Natural killer cell (primary cell): ENCODE measurements at regions of chr4 and their contacts with region 1.

Region 1: DNA sequence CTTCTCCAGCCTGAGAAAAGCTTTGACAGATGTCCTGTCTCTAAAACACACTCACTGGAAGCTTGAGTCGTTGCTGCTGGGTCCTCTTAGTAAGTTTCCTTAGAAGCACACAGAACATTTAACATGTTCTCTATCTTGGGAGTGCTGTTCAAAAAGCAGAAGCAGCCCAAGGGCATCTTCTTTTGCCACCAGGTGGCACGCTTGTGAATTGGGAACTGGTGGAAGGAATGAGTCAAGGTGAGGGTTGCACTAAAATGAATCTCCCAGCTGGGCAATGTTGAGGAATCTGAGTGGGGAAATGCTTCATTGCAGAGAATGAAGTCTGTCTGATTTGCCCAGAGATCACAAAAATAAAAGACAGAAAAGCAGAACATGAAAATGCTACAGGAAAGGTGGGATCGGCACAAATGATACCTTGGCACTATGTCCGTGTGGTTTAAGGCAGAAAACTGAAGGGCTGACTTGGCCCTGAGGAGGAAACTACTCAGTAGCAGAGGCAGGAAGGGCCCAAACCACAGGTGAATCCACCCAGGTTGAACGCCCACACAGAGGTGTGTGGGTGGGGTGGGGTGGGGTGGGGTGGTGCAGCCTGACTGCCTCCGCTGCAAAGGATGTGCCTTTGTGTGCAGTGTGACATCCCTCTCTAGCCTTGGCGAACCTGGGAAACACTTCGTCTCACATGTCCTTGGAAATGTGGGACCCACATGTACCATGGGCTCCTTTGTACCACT is 26.0 kb downstream of the KIT start:
- DNase-seq: peak; percentile 48 to 70
- ATAC-seq: peak; percentile 44 to 56 (median 45)
- H3K4me3 ChIP-seq: no peak overlapping the region
- H3K4me3 Mint-ChIP-seq: peak overlapping the region; percentile 84
- H3K27ac ChIP-seq: peak overlapping the region; percentile 52
- H3K27ac Mint-ChIP-seq: peak overlapping the region; percentile 14 to 81
- H3K4me1 ChIP-seq: peaks cover 51% of the 10 kb centered on the region
- H3K4me1 Mint-ChIP-seq: peaks cover 33 to 42% of the 10 kb centered on the region in 2 donors
- H3K27me3 ChIP-seq: no peaks in the 10 kb centered on the region
- H3K27me3 Mint-ChIP-seq: peaks cover 0 to 8% of the 10 kb centered on the region in 2 donors
- CTCF ChIP-seq: peak; percentile 67

Region 2: DNA sequence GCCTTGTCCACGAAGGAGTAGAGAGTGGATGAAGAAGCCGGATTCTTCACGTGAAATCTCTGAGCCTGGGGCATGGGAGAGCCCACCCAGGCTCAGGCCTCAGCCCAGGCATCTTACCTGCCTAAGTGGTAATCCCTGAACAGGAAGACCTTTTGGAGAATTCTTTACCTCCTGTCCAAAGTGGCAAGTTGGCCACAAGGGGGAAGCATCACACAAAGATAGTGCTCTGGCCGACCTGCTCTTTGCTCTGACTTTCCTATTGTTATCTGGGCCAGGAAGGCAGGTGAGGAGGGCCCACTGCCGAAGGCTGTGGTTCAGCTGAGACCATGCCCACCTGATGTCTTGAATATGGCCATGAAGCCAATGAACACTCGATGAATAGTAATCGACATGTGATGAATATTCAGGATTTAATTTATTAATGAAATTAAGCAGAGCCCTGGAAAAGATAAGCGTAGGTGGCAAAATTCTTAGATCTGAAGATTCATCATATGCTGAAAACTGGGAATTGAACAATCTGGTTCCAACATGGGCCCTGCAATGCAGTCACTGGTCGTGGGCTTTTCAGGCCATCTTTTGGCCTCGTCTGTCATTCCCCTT is 360.9 kb before region 1 on chr4:
- intact Hi-C with region 1: loop called (anchors 5 kb)
- DNase-seq: peak in 1 of 2 donors; percentile 64
- ATAC-seq: peak in 2 of 3 donors; percentile 52 to 53
- H3K4me3 ChIP-seq: no peak overlapping the region
- H3K4me3 Mint-ChIP-seq: no peak overlapping the region
- H3K27ac ChIP-seq: no peak overlapping the region
- H3K27ac Mint-ChIP-seq: no peak overlapping the region
- H3K4me1 ChIP-seq: no peaks in the 10 kb centered on the region
- H3K4me1 Mint-ChIP-seq: no peaks in the 10 kb centered on the region
- H3K27me3 ChIP-seq: no peaks in the 10 kb centered on the region
- H3K27me3 Mint-ChIP-seq: peaks cover 0 to 4% of the 10 kb centered on the region in 2 donors
- CTCF ChIP-seq: peak; percentile 56

Region 3: GRCh38 chr4:54632537-54632936 is 51.2 kb before region 1 on chr4:
- intact Hi-C with region 1: no loop called
- DNase-seq: no peak
- ATAC-seq: no peak
- H3K4me3 ChIP-seq: no peak overlapping the region
- H3K4me3 Mint-ChIP-seq: no peak overlapping the region
- H3K27ac ChIP-seq: no peak overlapping the region
- H3K27ac Mint-ChIP-seq: no peak overlapping the region
- H3K4me1 ChIP-seq: no peaks in the 10 kb centered on the region
- H3K4me1 Mint-ChIP-seq: peaks cover 8 to 10% of the 10 kb centered on the region in 2 donors
- H3K27me3 ChIP-seq: no peaks in the 10 kb centered on the region
- H3K27me3 Mint-ChIP-seq: peaks cover 6 to 21% of the 10 kb centered on the region in 2 donors
- CTCF ChIP-seq: no peak

Region 4: DNA sequence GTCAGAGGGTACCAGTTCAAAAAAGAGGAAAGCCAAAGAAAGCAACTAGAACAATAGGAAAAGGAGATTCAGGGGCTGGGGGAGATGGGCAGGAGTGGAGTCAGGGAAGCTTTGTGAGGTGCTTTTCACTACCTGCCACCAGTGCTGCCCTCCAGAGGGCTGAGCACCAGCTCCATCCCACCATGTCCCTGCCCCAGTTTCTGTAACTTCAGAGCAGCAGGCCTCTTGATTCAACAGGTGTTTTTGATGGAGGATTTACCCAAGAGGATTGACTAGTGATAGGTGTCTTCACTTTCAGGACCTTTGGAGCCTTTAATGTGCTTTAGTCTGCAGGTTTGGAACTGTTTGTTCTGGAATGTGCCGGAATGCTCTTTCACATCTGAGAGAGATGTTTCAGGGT is 13.9 kb before region 1 on chr4:
- intact Hi-C with region 1: no loop called
- DNase-seq: no peak
- ATAC-seq: no peak
- H3K4me3 ChIP-seq: no peak overlapping the region
- H3K4me3 Mint-ChIP-seq: no peak overlapping the region
- H3K27ac ChIP-seq: no peak overlapping the region
- H3K27ac Mint-ChIP-seq: no peak overlapping the region
- H3K4me1 ChIP-seq: peaks cover 3% of the 10 kb centered on the region
- H3K4me1 Mint-ChIP-seq: peaks cover 7 to 8% of the 10 kb centered on the region in 2 donors
- H3K27me3 ChIP-seq: no peaks in the 10 kb centered on the region
- H3K27me3 Mint-ChIP-seq: peaks cover 15 to 19% of the 10 kb centered on the region in 2 donors
- CTCF ChIP-seq: no peak

Region 5: DNA sequence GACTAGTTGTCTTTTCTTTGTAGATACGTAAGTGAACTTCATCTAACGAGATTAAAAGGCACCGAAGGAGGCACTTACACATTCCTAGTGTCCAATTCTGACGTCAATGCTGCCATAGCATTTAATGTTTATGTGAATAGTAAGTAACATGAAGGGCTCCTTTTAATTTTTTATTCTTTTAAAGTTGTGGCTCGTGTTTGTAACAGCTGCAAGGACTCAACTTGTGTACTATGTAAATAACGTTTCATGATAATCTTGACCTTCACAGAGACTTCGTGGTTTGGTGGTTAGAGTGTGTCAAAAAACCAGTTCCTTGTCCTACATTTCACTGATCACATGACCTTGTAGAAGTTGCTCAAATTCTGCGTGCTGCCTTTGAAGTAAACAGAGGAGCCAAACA is 25.6 kb after region 1 on chr4:
- intact Hi-C with region 1: loop called (anchors 2 kb)
- DNase-seq: peak in 1 of 2 donors; percentile 56
- ATAC-seq: peak; percentile 74 to 81 (median 77)
- H3K4me3 ChIP-seq: peak overlapping the region; percentile 10
- H3K4me3 Mint-ChIP-seq: peak overlapping the region; percentile 69
- H3K27ac ChIP-seq: peak overlapping the region; percentile 76
- H3K27ac Mint-ChIP-seq: peak overlapping the region; percentile 72 to 88
- H3K4me1 ChIP-seq: peaks cover 29% of the 10 kb centered on the region
- H3K4me1 Mint-ChIP-seq: peaks cover 47 to 48% of the 10 kb centered on the region in 2 donors
- H3K27me3 ChIP-seq: no peaks in the 10 kb centered on the region
- H3K27me3 Mint-ChIP-seq: peaks cover 0 to 7% of the 10 kb centered on the region in 2 donors
- CTCF ChIP-seq: no peak

Region 6: DNA sequence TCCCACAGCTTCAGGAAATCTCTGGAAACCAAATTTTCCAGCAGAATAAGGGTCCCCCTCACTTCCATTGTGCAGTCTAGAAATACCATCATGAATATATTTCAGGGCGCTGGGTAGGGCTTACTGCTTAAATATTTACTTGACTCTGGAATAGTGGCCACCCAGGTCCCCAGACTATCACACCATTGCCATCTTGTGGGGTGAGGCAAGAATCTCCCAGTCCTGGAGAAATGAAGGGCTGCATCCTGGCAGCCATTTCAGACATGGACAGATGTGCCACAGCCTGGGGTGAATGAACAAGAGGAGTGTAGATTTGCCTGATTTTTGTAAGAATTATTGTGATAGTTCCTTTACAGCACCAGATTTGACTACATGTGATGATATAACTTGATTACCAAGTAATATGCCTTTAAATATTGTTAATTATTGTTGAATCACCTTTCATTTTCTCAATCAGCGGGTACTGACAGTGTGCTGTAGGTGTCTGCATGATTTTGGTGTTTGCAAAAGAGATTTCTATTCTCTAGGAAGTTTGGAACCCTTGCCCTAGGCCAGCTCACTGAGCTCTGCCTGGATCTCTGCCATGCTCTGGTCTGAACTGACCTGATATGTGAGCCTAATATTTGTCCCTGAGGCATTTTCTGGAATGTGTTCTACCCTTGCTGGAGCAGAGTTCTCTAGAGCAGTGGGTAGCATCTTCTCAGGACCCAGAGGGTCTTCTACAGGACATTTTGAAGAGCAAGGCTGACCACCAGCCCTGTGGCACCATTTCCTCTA is 157.4 kb after region 1 on chr4:
- intact Hi-C with region 1: loop called (anchors 1 kb)
- DNase-seq: peak in 1 of 2 donors; percentile 4
- ATAC-seq: peak in 1 of 3 donors; percentile 32
- H3K4me3 ChIP-seq: no peak overlapping the region
- H3K4me3 Mint-ChIP-seq: no peak overlapping the region
- H3K27ac ChIP-seq: no peak overlapping the region
- H3K27ac Mint-ChIP-seq: no peak overlapping the region
- H3K4me1 ChIP-seq: peaks cover 18% of the 10 kb centered on the region
- H3K4me1 Mint-ChIP-seq: peaks cover 10 to 13% of the 10 kb centered on the region in 2 donors
- H3K27me3 ChIP-seq: no peaks in the 10 kb centered on the region
- H3K27me3 Mint-ChIP-seq: no peaks in the 10 kb centered on the region
- CTCF ChIP-seq: no peak

Region 7: DNA sequence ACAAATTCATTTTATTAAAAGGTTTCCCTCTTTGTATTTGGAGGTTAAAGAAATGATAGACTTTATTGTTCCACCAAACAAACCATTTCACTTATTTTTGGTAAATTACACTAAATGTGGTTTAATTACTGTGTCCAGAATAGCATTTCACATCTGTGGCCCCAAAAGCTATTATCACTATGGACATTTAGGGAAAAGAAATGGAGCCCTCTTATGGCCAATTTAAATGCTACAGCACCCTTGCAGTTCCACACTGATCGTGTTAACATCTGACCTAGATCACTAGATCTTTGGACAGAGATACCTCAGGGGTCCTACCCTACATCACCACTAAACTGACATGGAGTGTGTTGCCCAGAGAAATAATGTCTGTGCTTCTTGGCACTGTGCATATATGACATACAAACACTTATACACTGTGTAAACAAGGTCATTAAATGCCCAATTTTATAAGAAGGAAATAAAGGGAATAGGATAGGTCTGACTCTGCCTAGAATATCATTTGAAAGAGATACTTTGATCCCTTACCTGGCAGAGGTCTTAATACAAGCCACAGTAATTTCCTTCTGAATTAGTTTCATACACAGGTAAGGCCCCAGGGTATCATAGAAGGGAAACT is 277.7 kb after region 1 on chr4:
- intact Hi-C with region 1: loop called (anchors 1 kb)
- DNase-seq: peak in 1 of 2 donors; percentile 53
- ATAC-seq: peak; percentile 40 to 60 (median 52)
- H3K4me3 ChIP-seq: no peak overlapping the region
- H3K4me3 Mint-ChIP-seq: no peak overlapping the region
- H3K27ac ChIP-seq: no peak overlapping the region
- H3K27ac Mint-ChIP-seq: peak overlapping the region in 1 of 2 donors; percentile 33
- H3K4me1 ChIP-seq: peaks cover 11% of the 10 kb centered on the region
- H3K4me1 Mint-ChIP-seq: peaks cover 26 to 35% of the 10 kb centered on the region in 2 donors
- H3K27me3 ChIP-seq: no peaks in the 10 kb centered on the region
- H3K27me3 Mint-ChIP-seq: no peaks in the 10 kb centered on the region
- CTCF ChIP-seq: peak; percentile 68